Mammary epithelial cell (primary cell): ENCODE measurements at regions of chr2 and their contacts with region 1.

Region 1: DNA sequence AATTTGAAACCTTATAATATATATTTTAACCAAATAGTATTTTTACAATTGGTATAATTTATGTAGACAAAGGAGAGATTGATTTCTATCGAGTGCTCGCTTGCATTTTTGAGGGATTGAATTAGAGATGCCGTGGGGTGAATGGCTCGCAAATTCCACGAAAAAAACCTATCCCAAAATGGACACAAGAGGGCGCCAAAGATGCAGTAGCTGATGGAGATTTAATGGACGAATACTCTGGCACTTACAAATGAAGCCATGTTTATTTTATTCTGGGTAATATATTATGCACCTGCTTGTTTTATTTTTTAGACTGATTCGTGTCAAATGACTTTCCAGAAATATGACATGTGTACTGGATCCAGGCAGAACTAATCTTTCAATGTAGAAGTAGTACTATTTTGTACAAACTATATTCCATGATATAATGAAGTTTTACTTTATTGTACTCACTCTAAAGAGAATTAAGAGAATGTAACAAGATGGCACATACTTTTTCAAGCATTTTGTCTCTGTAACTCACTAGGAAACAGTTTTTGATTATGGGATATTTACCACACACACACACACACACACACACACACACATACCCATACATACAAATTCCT is 505.4 kb downstream of the PLCL1 start:
- DNase-seq: peak; percentile 27
- H3K4me3 ChIP-seq: no peak overlapping the region
- H3K27ac ChIP-seq: no peak overlapping the region
- H3K4me1 ChIP-seq: peaks cover 4% of the 10 kb centered on the region
- H3K27me3 ChIP-seq: peaks cover 1% of the 10 kb centered on the region
- CTCF ChIP-seq: peak; percentile 86 to 89

Region 2: GRCh38 chr2:198268519-198268918 is 41.3 kb before region 1 on chr2:
- CTCF ChIA-PET with region 1: no interaction called
- dilution Hi-C with region 1: no loop called
- in situ Hi-C with region 1: no loop called
- intact Hi-C with region 1: no loop called
- DNase-seq: no peak
- H3K4me3 ChIP-seq: no peak overlapping the region
- H3K27ac ChIP-seq: no peak overlapping the region
- H3K4me1 ChIP-seq: no peaks in the 10 kb centered on the region
- H3K27me3 ChIP-seq: no peaks in the 10 kb centered on the region
- CTCF ChIP-seq: no peak

Region 3: DNA sequence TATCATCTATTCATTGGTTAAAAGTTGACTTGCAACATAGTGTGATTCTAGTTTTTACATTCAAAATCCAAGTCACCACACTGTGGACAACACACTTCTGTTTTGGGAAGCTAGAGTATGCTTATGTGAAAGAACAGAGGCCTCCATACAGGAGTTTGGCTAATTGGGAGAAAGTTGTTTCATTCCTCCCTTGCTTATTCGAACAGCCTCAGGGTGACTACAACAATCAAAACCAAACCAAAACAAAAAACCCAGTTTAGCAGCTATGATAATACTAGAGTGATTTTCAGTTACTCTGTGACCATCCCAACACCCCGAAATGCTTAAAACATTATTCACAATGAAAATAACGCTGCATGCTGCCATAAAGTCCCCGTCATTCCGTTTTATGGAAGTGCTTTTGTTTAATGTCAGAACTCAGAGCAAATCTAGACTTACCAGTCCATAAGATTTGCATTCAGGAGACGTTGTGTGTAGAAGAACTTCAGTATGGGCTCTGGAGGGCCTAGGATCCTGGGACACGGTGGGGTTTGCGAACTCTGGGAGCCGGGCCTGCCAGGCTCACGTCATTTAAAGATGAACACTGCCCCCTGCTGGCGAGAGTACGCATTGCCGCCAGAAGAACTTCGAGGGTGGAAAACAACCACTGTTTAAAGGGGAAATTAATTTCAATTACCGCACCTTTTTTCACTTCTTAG is 1429.8 kb after region 1 on chr2:
- CTCF ChIA-PET with region 1: no interaction called
- dilution Hi-C with region 1: no loop called
- in situ Hi-C with region 1: loop called in 1 of 2 experiments (anchors 25 kb)
- intact Hi-C with region 1: loop called (anchors 5 kb)
- DNase-seq: peak; percentile 8
- H3K4me3 ChIP-seq: no peak overlapping the region
- H3K27ac ChIP-seq: no peak overlapping the region
- H3K4me1 ChIP-seq: no peaks in the 10 kb centered on the region
- H3K27me3 ChIP-seq: no peaks in the 10 kb centered on the region
- CTCF ChIP-seq: peak; percentile 82 to 83